ENCODE measurements at regions of chr11 and their contacts with region 1.

Region 1: DNA sequence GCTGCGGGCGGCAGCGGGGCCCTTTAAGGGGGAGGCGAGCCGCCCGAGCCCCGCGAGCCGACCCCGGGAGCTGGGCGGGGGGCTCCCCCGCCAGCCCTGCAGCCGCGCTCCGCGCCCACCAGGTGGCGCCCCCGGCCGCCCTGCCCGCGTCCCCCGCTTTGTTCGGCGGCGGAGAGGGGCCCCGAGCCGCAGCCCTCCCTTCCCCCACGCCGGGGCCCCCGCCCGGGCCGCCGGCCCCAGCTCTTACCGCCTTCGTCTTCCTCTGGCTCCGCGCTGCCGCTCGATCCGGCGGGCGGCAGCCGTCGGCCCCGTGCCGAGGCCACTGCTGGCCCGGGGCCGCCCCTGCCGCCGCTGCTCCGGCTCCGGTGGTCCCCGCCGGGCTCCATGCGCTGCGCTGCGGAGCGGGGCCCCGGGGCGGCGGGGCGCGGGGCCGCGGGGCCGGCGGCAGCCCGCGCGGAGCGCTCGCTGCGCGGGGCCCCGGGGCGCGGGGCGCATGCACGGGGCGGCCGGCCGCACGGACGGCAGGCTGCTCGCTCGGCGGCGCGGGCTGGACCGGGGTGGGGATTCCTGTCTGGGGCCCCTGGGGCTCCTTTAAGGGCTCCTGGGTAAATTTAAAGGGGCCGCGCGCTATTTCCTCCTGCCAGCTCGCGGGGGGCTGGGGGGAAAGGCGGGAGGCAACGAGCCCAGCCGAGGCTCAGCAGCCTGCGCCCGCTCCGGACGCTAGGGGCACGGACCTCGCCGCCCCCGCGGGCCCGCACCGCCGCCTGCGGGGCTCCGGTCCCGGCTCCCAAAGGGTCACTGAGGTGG is at the start of gene ZFTA:
- DNase-seq: peak in 1 of 2 donors; percentile 31
- ATAC-seq: peak; percentile 60 to 70
- H3K4me3 ChIP-seq: peak within 1 kb of the TSS; percentile 67 to 83 (median 72)
- H3K27ac ChIP-seq: peak within 1 kb of the TSS; percentile 69 to 81 (median 77)
- H3K4me1 ChIP-seq: peaks cover 10 to 13% of the 10 kb centered on the region in 2 donors
- H3K27me3 ChIP-seq: no peaks in the 10 kb centered on the region
- CTCF ChIP-seq: peak in 4 of 5 experiments; percentile 90 to 97 (median 95)
- POLR2A ChIP-seq: no peak
- total RNA-seq, gene ZFTA: 6.9 to 18.6 (median 11.8) TPM

Region 2: DNA sequence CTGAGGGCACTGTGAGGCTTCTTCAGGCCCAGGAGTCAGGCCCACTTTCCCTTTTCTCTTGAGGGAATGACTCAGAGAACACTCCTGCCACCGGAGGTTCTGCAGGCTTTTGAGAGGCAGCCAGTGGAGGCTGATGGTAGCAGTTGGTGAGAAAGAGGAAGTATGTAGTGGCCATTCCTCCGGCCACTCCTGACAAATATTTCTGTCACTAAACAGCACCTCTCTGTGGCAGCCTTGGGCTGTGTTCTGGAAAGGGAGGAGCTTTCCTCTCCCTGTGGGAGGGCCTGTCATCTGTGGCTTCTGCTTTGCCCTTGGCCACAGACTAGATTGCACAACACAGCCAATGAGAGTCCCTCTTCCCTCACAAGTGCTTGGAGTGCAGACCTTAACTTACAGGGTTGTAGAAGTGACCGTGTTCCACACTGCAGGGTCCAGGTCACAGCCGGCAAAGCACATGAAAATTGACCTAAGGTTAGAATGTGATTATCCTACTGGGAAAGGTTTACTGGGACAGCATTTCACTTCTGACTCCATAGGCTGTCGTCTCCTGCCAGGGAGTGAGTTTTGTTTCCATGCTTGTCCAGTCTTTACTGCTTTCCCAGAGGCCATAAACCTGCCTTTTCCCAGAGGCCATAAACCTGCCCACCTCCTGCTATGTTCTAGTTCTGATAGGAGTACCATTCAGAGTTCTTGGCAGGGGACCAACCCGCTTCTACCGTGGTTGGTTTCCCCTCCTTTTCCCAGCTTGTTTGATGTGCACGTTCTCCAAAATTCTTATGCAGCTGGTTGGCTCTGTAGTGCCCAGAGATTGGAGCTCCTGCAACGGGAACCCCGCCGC is 103.7 kb after region 1 on chr11:
- in situ Hi-C with region 1: no loop called
- intact Hi-C with region 1: loop called (anchors 10 kb)
- DNase-seq: peak; percentile 87 to 92
- ATAC-seq: peak; percentile 98
- H3K4me3 ChIP-seq: peak overlapping the region in 3 of 4 donors; percentile 10 to 46 (median 14)
- H3K27ac ChIP-seq: peak overlapping the region; percentile 71 to 86 (median 79)
- H3K4me1 ChIP-seq: peaks cover 53 to 56% of the 10 kb centered on the region in 2 donors
- H3K27me3 ChIP-seq: no peaks in the 10 kb centered on the region
- CTCF ChIP-seq: peak; percentile 42 to 56 (median 53)
- POLR2A ChIP-seq: peak in 1 of 2 donors; percentile 24

Region 3: DNA sequence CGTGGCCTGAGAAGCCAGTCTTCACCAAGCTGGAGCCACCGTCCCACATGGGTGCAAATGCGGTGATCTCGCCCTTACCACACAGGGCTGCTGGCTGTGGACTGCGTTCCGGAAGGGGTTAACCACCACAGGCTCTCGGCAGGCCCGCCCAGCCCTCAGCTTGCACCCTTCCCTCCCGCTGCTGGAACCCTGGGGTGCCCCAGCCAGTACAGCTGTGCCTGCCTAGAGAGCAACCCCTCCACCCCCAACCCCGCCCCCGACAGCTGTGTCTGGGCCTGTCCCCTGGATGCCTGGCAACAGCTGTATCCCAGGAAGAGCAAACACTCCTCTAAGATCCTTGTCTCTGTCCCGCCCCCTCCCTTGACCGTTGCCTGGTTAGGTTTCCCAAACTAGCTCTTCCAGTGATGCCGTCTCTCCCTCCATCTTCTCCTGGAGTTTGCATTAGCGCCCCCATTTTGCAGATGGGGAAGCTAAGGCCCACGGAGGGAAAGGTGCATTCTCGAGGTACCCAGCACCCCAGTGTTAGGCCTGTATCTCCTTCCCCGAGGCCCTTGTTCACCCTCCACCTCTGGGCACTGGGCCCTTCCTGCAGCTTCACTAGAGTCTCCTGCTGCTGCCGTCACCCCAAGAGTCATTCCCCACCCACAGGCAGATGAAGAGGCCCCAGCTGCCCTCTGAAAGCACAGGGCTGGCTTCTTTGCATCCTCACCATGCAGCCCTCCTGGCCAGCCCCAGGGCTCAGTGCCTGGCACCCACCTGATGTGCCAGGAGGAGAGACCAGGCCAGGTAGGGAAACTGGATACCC is 193.4 kb after region 1 on chr11:
- in situ Hi-C with region 1: no loop called
- intact Hi-C with region 1: no loop called
- DNase-seq: no peak
- ATAC-seq: no peak
- H3K4me3 ChIP-seq: no peak overlapping the region
- H3K27ac ChIP-seq: no peak overlapping the region
- H3K4me1 ChIP-seq: no peaks in the 10 kb centered on the region
- H3K27me3 ChIP-seq: no peaks in the 10 kb centered on the region
- CTCF ChIP-seq: no peak
- POLR2A ChIP-seq: no peak

Measured in gastrocnemius medialis (tissue), 4 donors.